ENCODE measurements at regions of chr3 and their contacts with region 1.

Region 1: GRCh38 chr3:29128001-29128400 is 152.9 kb upstream of the RBMS3 start:
- DNase-seq: peak; percentile 90
- H3K4me3 ChIP-seq: no peak overlapping the region
- H3K27ac ChIP-seq: peak overlapping the region; percentile 47
- H3K4me1 ChIP-seq: peaks cover 15% of the 10 kb centered on the region
- H3K27me3 ChIP-seq: no peaks in the 10 kb centered on the region
- CTCF ChIP-seq: no peak
- POLR2A ChIP-seq: no peak

Region 2: DNA sequence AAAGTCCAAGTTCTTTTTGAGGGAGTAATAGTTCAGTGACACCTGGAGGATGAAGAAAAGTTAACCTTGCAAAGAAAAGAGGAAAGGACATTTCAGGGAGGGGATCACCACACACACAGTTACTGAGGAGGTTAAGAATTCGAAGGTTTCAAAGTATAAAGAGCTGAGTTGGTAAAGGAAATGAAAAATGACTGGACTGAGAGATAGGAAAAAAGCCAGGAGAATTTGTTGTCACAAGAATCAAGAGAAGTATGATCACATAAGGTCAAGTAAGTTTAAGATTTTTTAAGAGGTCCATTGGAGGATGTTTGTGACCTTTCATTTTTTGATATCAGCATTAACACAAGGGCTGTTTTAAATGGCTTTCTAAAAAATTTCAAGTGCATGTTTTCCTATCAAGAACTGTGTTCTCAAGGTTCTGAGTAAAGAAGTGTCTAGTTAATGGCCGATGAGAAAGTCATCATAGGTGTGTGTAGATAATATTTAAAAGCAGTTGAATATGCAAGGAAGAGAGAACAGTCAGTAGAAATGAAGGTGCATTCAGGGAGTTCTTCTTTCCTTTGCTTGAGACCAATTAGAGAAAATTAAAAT is 36.3 kb before region 1 on chr3:
- CTCF ChIA-PET with region 1: interaction called, 3 read pairs
- POLR2A ChIA-PET with region 1: no interaction called
- dilution Hi-C with region 1: no loop called
- intact Hi-C with region 1: loop called (anchors 5 kb)
- DNase-seq: peak; percentile 94
- H3K4me3 ChIP-seq: no peak overlapping the region
- H3K27ac ChIP-seq: peak overlapping the region; percentile 49
- H3K4me1 ChIP-seq: peaks cover 16% of the 10 kb centered on the region
- H3K27me3 ChIP-seq: no peaks in the 10 kb centered on the region
- CTCF ChIP-seq: no peak
- POLR2A ChIP-seq: no peak

Region 3: DNA sequence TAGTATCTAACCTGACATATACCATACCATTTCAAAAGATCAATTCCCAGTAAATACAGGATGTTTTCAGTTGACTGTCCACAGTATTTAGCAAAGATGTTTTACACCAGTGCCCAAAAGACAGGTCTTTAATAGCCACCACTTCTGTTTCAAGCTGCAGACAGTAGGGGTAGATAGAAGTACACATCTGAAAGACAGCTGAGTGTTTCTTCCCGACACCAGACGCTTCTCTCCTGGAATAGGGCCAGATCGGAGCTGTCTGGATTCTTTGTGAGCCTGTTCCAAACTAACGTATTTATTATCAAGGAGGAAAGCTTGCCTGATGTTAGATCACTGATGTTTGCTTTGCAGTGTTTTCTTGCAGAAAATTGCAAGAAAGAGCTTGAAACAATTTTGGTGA is 16.8 kb after region 1 on chr3:
- CTCF ChIA-PET with region 1: no interaction called
- POLR2A ChIA-PET with region 1: no interaction called
- dilution Hi-C with region 1: no loop called
- intact Hi-C with region 1: loop called (anchors 2 kb)
- DNase-seq: peak; percentile 58
- H3K4me3 ChIP-seq: no peak overlapping the region
- H3K27ac ChIP-seq: no peak overlapping the region
- H3K4me1 ChIP-seq: peaks cover 20% of the 10 kb centered on the region
- H3K27me3 ChIP-seq: no peaks in the 10 kb centered on the region
- CTCF ChIP-seq: no peak
- POLR2A ChIP-seq: no peak

Region 4: GRCh38 chr3:29183346-29184087 is 55.5 kb after region 1 on chr3:
- CTCF ChIA-PET with region 1: no interaction called
- POLR2A ChIA-PET with region 1: no interaction called
- dilution Hi-C with region 1: no loop called
- intact Hi-C with region 1: no loop called
- DNase-seq: no peak
- H3K4me3 ChIP-seq: no peak overlapping the region
- H3K27ac ChIP-seq: no peak overlapping the region
- H3K4me1 ChIP-seq: peaks cover 20% of the 10 kb centered on the region
- H3K27me3 ChIP-seq: no peaks in the 10 kb centered on the region
- CTCF ChIP-seq: no peak
- POLR2A ChIP-seq: no peak